Activated T-helper 1 cell treated with anti-CD3 and anti-CD28 coated beads, Interleukin-12 subunit alpha, Interleukin-12 subunit beta, Interleukin-2, Interleukin-4 antibody, amounts not matched to agents 30 ng/mL and 10 ng/mL and 1 ng/mL, durations not matched to agents 14 hours and 24 hours and 36 hours (primary cell): ENCODE measurements at regions of chr20 and their contacts with region 1.

Region 1: GRCh38 chr20:38748097-38748860 is at the start of gene ACTR5:
- DNase-seq: peak; percentile 94
- H3K4me3 Mint-ChIP-seq: peak within 1 kb of the TSS; percentile 94
- H3K27ac Mint-ChIP-seq: peak within 1 kb of the TSS; percentile 98
- H3K4me1 Mint-ChIP-seq: peaks cover 37% of the 10 kb centered on the region
- H3K27me3 Mint-ChIP-seq: peaks cover 8% of the 10 kb centered on the region
- total RNA-seq, gene ACTR5: 14.9 and 15.2 TPM in 2 replicates

Region 2: GRCh38 chr20:38645980-38646858 is 102.1 kb before region 1 on chr20:
- intact Hi-C with region 1: loop called (anchors 1 kb)
- DNase-seq: peak; percentile 87
- H3K4me3 Mint-ChIP-seq: peak overlapping the region; percentile 82
- H3K27ac Mint-ChIP-seq: no peak overlapping the region
- H3K4me1 Mint-ChIP-seq: peaks cover 9% of the 10 kb centered on the region
- H3K27me3 Mint-ChIP-seq: peaks cover 34% of the 10 kb centered on the region

Region 3: GRCh38 chr20:38730989-38731737 is 17.1 kb before region 1 on chr20:
- intact Hi-C with region 1: loop called (anchors 1 kb)
- DNase-seq: peak; percentile 57
- H3K4me3 Mint-ChIP-seq: peak overlapping the region; percentile 61
- H3K27ac Mint-ChIP-seq: peak overlapping the region; percentile 76
- H3K4me1 Mint-ChIP-seq: peaks cover 48% of the 10 kb centered on the region
- H3K27me3 Mint-ChIP-seq: peaks cover 85% of the 10 kb centered on the region

Region 4: DNA sequence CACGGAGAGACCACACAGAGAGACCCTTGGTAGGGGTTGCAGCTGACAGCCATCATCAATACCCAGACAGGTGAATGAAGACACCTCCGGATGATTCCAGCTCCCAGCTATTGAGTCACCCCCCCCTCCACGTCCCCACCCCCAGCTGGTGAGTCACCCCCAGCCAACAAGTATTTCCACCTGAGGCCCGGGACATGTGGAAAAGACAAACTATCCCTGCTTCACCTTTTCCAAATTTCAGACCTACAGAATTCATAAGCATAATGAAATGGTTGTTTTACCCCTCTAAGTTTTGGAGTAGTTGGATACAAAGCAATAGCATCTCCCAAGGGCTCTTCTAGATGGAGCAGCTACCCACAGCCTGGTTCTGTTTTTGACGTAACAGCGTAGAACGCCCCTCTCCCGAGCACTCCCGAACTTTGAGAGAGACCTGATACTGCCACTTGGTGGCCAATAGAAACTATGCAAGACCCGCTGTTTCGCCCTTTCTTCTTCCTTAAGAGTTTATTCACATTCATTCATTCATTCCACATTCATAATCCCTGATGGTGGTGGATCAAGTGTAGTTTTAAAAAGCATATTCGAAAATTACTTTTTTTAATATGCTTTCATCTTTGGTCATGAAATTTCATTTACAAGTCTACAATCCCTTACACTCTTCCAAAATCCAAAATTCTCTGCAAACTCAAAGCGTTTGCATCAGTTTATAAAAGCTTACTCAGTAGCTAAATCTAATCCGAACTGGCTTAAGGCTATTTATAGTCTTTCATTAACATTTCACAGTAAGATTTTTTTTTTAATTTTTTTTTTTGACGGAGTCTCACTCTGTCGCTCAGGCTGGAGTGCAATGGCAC is 42.1 kb after region 1 on chr20:
- intact Hi-C with region 1: no loop called
- DNase-seq: peak; percentile 25
- H3K4me3 Mint-ChIP-seq: no peak overlapping the region
- H3K27ac Mint-ChIP-seq: no peak overlapping the region
- H3K4me1 Mint-ChIP-seq: peaks cover 7% of the 10 kb centered on the region
- H3K27me3 Mint-ChIP-seq: no peaks in the 10 kb centered on the region

Region 5: GRCh38 chr20:38842558-38842981 is 94.3 kb after region 1 on chr20:
- intact Hi-C with region 1: loop called (anchors 1 kb)
- DNase-seq: no peak
- H3K4me3 Mint-ChIP-seq: peak overlapping the region; percentile 78
- H3K27ac Mint-ChIP-seq: peak overlapping the region; percentile 97
- H3K4me1 Mint-ChIP-seq: peaks cover 82% of the 10 kb centered on the region
- H3K27me3 Mint-ChIP-seq: no peaks in the 10 kb centered on the region

Region 6: GRCh38 chr20:38926142-38926933 is 178.1 kb after region 1 on chr20 and contains the start of gene FAM83D:
- intact Hi-C with region 1: loop called (anchors 1 kb)
- DNase-seq: peak; percentile 97
- H3K4me3 Mint-ChIP-seq: peak within 1 kb of the TSS; percentile 86
- H3K27ac Mint-ChIP-seq: peak within 1 kb of the TSS; percentile 81
- H3K4me1 Mint-ChIP-seq: peaks cover 39% of the 10 kb centered on the region
- H3K27me3 Mint-ChIP-seq: no peaks in the 10 kb centered on the region
- total RNA-seq, gene FAM83D: 11.0 and 12.4 TPM in 2 replicates